ENCODE measurements at regions of chr11 and their contacts with region 1.

Region 1: GRCh38 chr11:117107701-117108590 is 9.7 kb upstream of the SIK3 start:
- DNase-seq: no peak
- ATAC-seq: no peak

Region 2: DNA sequence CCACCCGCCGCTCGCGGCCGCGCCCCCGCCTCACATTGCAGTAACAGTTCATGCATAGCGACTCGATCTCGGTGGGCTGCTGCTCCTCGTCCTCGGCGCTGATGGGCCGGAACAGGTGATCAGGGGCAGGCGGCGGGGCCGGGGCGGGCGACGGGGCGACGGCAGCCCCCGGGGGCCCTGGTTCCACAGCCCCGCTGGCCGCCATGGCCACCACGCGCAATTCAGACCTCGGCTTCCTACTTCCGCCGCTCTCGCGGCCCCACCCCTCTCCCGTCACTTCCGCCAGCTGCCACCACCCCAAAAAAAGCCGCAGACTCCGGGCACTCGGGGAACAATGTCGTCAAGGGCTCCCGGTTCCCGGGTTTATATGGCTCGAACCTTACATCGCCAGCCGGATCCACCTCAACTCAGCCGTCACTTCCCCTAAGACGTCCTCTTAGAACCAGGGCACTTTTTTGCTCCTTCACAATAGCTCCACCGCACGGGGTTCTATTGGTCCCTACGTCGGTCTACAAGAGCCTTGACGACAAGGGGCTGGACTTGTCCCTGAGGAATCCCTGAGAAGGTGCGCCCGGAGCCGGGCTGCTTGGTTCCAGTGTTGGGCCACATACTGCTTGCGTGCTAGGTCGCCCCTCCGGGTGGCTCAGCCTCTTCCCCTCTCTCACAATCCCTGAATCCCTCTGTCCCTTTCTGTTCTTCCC is 320.0 kb before region 1 on chr11 and contains the start of gene ZPR1:
- intact Hi-C with region 1: loop called (anchors 1 to 5 kb)
- DNase-seq: peak; percentile 88
- ATAC-seq: peak; percentile 88 to 91
- total RNA-seq, gene ZPR1: 23.0 to 33.9 TPM

Region 3: GRCh38 chr11:116879800-116880625 is 227.9 kb before region 1 on chr11:
- intact Hi-C with region 1: loop called (anchors 5 kb)
- DNase-seq: no peak
- ATAC-seq: peak; percentile 90 to 96

Region 4: DNA sequence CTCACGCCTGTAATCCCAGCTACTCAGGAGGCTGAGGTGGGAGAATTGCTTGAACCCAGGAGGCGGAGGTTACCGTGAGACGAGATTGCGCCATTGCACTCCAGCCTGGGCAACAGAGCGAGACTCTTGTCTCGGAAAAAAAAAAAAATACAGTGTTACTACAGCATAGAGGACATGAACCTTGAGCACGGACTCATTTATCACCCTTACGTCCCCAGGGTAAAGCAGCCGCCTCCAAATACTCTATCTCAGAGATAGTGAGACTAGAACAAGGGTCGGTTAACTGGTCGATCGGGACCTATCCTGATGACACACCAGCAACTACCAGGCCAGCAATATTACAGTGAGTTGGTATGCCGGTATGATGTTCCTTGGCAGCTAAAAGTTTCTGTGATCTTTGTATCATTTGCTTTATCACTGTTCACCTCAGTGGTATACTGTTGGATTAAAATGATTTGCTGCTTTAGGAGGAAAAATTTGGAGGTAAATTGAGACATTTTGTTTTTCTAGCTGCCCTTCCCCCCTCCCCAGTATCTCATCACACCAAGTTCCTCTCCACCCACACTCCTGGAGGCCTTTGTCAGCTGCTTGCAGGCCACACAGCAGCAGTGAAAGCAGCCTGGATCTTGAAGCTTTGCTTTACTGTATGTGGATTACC is 63.6 kb after region 1 on chr11:
- intact Hi-C with region 1: no loop called
- DNase-seq: no peak
- ATAC-seq: peak in 1 of 2 donors; percentile 29

Measured in left cardiac atrium (tissue), 4 donors.